ENCODE measurements at regions of chr12 and their contacts with region 1.

Region 1: GRCh38 chr12:53625946-53626701 is at the start of gene ATF7:
- DNase-seq: peak; percentile 98
- ATAC-seq: peak; percentile 94
- H3K4me3 ChIP-seq: peak within 1 kb of the TSS; percentile 72
- H3K27ac ChIP-seq: peak within 1 kb of the TSS; percentile 75
- H3K4me1 ChIP-seq: peaks cover 21% of the 10 kb centered on the region
- H3K27me3 ChIP-seq: no peaks in the 10 kb centered on the region
- CTCF ChIP-seq: no peak
- total RNA-seq, gene ATF7: 7.9 and 14.2 TPM in 2 replicates

Region 2: GRCh38 chr12:53500776-53501614 is 125.1 kb before region 1 on chr12 and contains the start of gene TARBP2:
- CTCF ChIA-PET with region 1: no interaction called
- POLR2A ChIA-PET with region 1: interaction called, 13 read pairs
- intact Hi-C with region 1: no loop called
- DNase-seq: peak; percentile 98
- ATAC-seq: peak; percentile 77
- H3K4me3 ChIP-seq: peak within 1 kb of the TSS; percentile 75
- H3K27ac ChIP-seq: peak within 1 kb of the TSS; percentile 85
- H3K4me1 ChIP-seq: peaks cover 33% of the 10 kb centered on the region
- H3K27me3 ChIP-seq: no peaks in the 10 kb centered on the region
- CTCF ChIP-seq: no peak
- total RNA-seq, gene TARBP2: 82.0 and 98.9 TPM in 2 replicates

Region 3: GRCh38 chr12:53543539-53543938 is 82.6 kb before region 1 on chr12:
- CTCF ChIA-PET with region 1: interaction called, 4 read pairs
- POLR2A ChIA-PET with region 1: no interaction called
- intact Hi-C with region 1: loop called (anchors 2 kb)
- DNase-seq: peak; percentile 69
- ATAC-seq: peak; percentile 89
- H3K4me3 ChIP-seq: no peak overlapping the region
- H3K27ac ChIP-seq: no peak overlapping the region
- H3K4me1 ChIP-seq: peaks cover 7% of the 10 kb centered on the region
- H3K27me3 ChIP-seq: no peaks in the 10 kb centered on the region
- CTCF ChIP-seq: peak; percentile 94

Region 4: DNA sequence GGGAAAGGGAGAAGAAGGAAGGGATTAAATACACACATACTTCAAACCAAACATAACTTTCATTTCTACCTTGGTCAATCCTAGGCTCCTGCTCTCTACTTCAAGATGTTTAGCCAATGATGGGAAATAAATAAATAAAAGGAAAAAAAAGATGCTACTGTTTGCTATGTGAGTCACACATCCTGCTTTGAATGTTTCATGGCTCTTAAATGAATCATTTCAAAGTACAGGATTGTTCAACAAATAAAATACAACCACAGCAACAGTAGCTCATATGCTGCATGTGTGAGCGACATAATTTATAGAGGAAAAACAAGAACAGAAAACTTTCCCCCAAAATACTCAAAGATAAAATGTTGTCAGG is 64.6 kb before region 1 on chr12:
- CTCF ChIA-PET with region 1: interaction called, 3 read pairs
- POLR2A ChIA-PET with region 1: interaction called, 4 read pairs
- intact Hi-C with region 1: loop called (anchors 5 kb)
- DNase-seq: peak; percentile 91
- ATAC-seq: peak; percentile 92
- H3K4me3 ChIP-seq: peak overlapping the region; percentile 10; the same call in 1 of the 2 replicates
- H3K27ac ChIP-seq: peak overlapping the region; percentile 82
- H3K4me1 ChIP-seq: peaks cover 38% of the 10 kb centered on the region
- H3K27me3 ChIP-seq: no peaks in the 10 kb centered on the region
- CTCF ChIP-seq: no peak

Region 5: DNA sequence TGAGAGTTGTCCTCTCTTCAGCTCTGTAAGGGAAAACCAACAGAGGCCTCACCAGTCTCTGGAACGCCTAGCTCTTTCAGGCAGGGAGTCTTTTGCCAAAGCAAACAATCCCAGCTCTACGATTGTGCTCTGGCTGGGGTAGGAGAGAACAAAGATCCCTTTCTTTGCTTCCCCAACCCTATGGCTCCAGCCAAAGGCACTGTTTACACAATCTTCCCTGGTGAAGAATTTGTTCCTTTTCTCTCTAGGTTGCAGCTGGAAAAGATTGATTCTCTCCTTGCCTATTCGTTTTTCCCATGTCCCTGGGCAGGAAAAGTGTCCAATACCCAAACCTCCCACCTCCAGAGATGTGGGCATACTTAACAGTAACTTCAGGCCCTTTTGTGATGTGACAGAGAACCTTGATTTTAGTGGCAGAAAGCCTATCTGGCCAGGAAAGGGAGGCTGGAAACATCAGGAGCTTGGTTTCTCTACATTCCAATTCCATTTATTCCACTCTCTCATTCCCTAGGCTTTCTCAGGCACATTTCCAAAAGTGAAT is 33.0 kb after region 1 on chr12:
- CTCF ChIA-PET with region 1: no interaction called
- POLR2A ChIA-PET with region 1: interaction called, 14 read pairs
- intact Hi-C with region 1: loop called (anchors 1 kb)
- DNase-seq: peak; percentile 95
- ATAC-seq: peak; percentile 99
- H3K4me3 ChIP-seq: peak overlapping the region; percentile 25; the same call in 1 of the 2 replicates
- H3K27ac ChIP-seq: peak overlapping the region; percentile 90
- H3K4me1 ChIP-seq: peaks cover 22% of the 10 kb centered on the region
- H3K27me3 ChIP-seq: no peaks in the 10 kb centered on the region
- CTCF ChIP-seq: no peak

Region 6: GRCh38 chr12:53675651-53676453 is 49.7 kb after region 1 on chr12 and contains the start of gene ATP5MC2:
- CTCF ChIA-PET with region 1: interaction called, 4 read pairs
- POLR2A ChIA-PET with region 1: no interaction called
- intact Hi-C with region 1: loop called (anchors 1 kb)
- DNase-seq: peak; percentile 99
- ATAC-seq: peak; percentile 96
- H3K4me3 ChIP-seq: peak within 1 kb of the TSS; percentile 72
- H3K27ac ChIP-seq: peak within 1 kb of the TSS; percentile 62
- H3K4me1 ChIP-seq: peaks cover 16% of the 10 kb centered on the region
- H3K27me3 ChIP-seq: no peaks in the 10 kb centered on the region
- CTCF ChIP-seq: peak; percentile 99
- total RNA-seq, gene ATP5MC2: 244 and 322 TPM in 2 replicates

Region 7: DNA sequence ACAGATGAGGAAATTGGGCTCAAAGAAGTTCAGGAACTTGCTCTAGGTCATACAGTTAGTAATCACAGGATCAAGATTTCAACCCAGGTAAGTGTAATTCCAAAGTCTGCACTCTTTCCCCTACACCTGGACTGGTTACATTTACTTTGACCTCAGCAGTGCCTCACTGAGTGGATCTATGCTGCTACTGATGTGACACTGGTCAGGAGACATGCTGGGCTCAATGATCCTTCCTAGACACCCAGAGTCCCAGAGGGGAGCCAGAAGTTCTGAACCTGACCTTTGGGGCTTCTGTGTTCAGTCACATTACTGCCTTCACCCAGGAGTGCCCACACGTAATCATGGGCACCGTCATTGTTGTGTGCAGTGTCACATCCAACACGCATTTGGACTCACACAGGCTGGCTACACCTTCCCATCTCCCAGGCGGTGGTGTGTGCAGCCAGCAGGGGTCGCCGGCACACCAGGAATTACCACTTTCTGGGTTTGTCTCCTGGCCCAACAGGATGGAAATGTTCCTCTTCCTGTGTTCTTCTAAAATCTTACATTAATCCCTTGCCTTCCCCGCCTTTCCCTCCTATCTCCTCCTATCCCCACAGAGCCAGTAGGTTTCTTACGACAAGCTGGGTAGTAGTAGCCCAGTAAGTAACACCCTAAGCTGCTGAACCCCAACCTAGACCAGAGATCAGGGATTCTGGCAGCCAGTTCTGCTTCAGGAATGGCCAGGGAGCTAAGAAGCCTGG is 75.6 kb after region 1 on chr12:
- CTCF ChIA-PET with region 1: no interaction called
- POLR2A ChIA-PET with region 1: interaction called, 11 read pairs
- intact Hi-C with region 1: no loop called
- DNase-seq: peak; percentile 81
- ATAC-seq: peak; percentile 99
- H3K4me3 ChIP-seq: no peak overlapping the region
- H3K27ac ChIP-seq: no peak overlapping the region
- H3K4me1 ChIP-seq: no peaks in the 10 kb centered on the region
- H3K27me3 ChIP-seq: 0 out of 2 replicates have a peak, but pooled peaks cover 4% of the 10 kb centered on the region
- CTCF ChIP-seq: peak; percentile 94